ENCODE measurements at regions of chr11 and their contacts with region 1.

Region 1: GRCh38 chr11:118689851-118690552 is 10.6 kb upstream of the TREH start:
- DNase-seq: peak; percentile 90
- CTCF ChIP-seq: peak; percentile 99

Region 2: GRCh38 chr11:118659314-118659952 is 30.6 kb before region 1 on chr11:
- CTCF ChIA-PET with region 1: interaction called, 18 read pairs
- POLR2A ChIA-PET with region 1: no interaction called
- DNase-seq: peak; percentile 94
- CTCF ChIP-seq: peak; percentile 88

Region 3: GRCh38 chr11:118705111-118705741 is 15.2 kb after region 1 on chr11:
- CTCF ChIA-PET with region 1: interaction called, 41 read pairs
- POLR2A ChIA-PET with region 1: no interaction called
- DNase-seq: no peak
- CTCF ChIP-seq: no peak

Region 4: DNA sequence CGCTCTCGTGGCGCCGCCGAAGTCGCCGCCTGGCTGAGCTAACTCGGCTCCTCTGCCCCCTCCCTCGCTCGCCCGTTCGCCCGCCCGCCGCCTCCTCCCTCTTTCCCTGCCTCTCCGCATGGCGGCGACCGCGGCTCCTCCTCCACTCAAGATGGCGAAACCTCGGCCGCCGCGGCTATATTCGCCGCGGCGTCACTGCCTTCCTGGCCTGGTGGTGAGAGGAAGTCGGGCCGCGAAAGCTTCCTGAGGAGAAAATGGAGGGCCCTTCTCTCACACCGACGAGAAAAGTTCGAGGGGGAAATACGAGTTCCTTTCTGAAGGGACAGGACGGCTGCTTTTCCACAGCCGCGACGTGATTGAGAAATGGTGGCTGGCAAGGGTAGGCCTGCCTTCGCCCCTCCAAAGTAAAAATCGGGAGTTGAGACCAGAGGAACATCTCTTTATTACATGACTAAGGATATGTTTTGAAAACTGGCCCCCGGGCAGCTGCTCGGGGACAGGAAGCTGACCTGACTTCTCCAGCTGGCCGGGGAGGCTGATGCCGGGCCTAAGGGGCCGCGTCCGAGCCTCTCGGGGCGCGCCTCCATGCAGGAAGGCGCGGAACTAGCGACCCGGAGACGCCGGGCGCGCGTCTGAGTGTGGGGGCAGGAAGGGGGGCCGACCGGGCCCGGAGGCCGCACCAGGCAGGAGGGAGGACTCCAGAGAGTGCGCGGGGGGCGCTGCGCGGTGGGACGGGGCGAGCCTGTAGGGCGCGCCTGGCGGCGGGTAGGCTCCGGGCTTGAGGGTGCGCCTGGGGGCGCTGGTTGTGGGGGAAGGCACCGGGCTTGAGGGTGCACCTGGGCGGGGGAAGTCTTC is 101.3 kb after region 1 on chr11 and contains the start of gene DDX6:
- CTCF ChIA-PET with region 1: interaction called, 24 read pairs
- POLR2A ChIA-PET with region 1: no interaction called
- DNase-seq: peak; percentile 88
- CTCF ChIP-seq: peak; percentile 50

Region 5: DNA sequence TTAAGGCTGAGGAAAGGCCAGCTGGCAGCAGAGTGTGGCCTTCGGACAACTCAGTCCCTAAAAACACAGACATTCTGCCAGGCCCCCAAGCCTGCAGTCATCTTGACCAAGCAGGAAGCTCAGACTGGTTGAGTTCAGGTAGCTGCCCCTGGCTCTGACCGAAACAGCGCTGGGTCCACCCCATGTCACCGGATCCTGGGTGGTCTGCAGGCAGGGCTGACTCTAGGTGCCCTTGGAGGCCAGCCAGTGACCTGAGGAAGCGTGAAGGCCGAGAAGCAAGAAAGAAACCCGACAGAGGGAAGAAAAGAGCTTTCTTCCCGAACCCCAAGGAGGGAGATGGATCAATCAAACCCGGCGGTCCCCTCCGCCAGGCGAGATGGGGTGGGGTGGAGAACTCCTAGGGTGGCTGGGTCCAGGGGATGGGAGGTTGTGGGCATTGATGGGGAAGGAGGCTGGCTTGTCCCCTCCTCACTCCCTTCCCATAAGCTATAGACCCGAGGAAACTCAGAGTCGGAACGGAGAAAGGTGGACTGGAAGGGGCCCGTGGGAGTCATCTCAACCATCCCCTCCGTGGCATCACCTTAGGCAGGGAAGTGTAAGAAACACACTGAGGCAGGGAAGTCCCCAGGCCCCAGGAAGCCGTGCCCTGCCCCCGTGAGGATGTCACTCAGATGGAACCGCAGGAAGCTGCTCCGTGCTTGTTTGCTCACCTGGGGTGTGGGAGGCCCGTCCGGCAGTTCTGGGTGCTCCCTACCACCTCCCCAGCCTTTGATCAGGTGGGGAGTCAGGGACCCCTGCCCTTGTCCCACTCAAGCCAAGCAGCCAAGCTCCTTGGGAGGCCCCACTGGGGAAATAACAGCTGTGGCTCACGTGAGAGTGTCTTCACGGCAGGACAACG is 205.4 kb after region 1 on chr11:
- CTCF ChIA-PET with region 1: interaction called, 13 read pairs
- POLR2A ChIA-PET with region 1: interaction called, 3 read pairs
- DNase-seq: peak; percentile 75
- CTCF ChIP-seq: no peak

Region 6: GRCh38 chr11:118933501-118933949 is 243.5 kb after region 1 on chr11:
- CTCF ChIA-PET with region 1: interaction called, 45 read pairs
- POLR2A ChIA-PET with region 1: interaction called, 3 read pairs
- DNase-seq: no peak
- CTCF ChIP-seq: no peak